Activated CD8-positive, alpha-beta memory T cell treated with anti-CD3 and anti-CD28 coated beads, Interleukin-2, amount 10 ng/mL, durations not matched to agents 7 days and 5 days (primary cell): ENCODE measurements at regions of chr21 and their contacts with region 1.

Region 1: GRCh38 chr21:32569261-32570230 is 15.8 kb downstream of the TCP10L start:
- DNase-seq: peak; percentile 90
- ATAC-seq: peak; percentile 94
- H3K4me3 Mint-ChIP-seq: peak overlapping the region; percentile 85
- H3K27ac Mint-ChIP-seq: peak overlapping the region; percentile 86
- H3K4me1 Mint-ChIP-seq: peaks cover 22% of the 10 kb centered on the region
- H3K27me3 Mint-ChIP-seq: peaks cover 2% of the 10 kb centered on the region

Region 2: GRCh38 chr21:32412162-32413014 is 157.2 kb before region 1 on chr21 and contains the start of gene EVA1C:
- CTCF ChIA-PET with region 1: interaction called, 15 read pairs
- DNase-seq: peak; percentile 59
- ATAC-seq: peak; percentile 63
- H3K4me3 Mint-ChIP-seq: peak within 1 kb of the TSS; percentile 90
- H3K27ac Mint-ChIP-seq: peak within 1 kb of the TSS; percentile 91
- H3K4me1 Mint-ChIP-seq: peaks cover 46% of the 10 kb centered on the region
- H3K27me3 Mint-ChIP-seq: no peaks in the 10 kb centered on the region
- total RNA-seq, gene EVA1C: 4.5 to 7.6 TPM

Region 3: GRCh38 chr21:32448803-32449594 is 120.5 kb before region 1 on chr21:
- CTCF ChIA-PET with region 1: no interaction called
- DNase-seq: no peak
- ATAC-seq: no peak
- H3K4me3 Mint-ChIP-seq: no peak overlapping the region
- H3K27ac Mint-ChIP-seq: no peak overlapping the region
- H3K4me1 Mint-ChIP-seq: no peaks in the 10 kb centered on the region
- H3K27me3 Mint-ChIP-seq: no peaks in the 10 kb centered on the region

Region 4: DNA sequence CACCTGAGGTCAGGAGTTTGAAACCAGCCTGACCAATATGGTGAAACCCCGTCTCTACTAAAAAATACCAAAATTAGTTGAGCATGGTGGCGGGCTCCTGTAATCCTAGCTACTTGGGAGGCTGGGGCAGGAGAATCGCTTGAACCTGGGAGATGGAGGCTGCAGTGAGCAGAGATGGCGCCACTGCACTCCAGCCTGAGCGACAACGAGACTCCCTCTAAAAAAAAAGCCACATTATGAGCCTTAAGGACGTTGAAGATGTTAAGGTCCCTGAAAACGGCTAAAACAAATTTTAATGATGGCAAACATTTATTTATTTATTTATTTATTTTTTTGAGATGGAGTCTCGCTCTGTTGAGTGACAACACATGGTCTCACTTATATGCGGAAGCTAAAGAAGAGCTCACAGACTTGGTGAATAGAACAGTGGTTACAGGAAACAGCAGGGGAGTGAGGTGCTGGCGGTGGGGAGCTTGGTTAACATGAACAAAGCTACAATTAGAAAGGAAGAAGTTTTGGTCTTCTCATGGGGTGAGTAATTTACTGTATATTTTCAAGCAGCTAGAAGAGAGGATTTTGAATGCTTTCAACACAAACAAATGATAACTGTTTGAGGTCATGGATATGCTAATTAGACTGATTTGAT is 31.3 kb before region 1 on chr21:
- CTCF ChIA-PET with region 1: interaction called, 16 read pairs
- DNase-seq: peak; percentile 84
- ATAC-seq: peak; percentile 95
- H3K4me3 Mint-ChIP-seq: peak overlapping the region; percentile 29
- H3K27ac Mint-ChIP-seq: peak overlapping the region; percentile 78
- H3K4me1 Mint-ChIP-seq: peaks cover 24% of the 10 kb centered on the region
- H3K27me3 Mint-ChIP-seq: no peaks in the 10 kb centered on the region